ENCODE measurements at regions of chr18 and their contacts with region 1.

Region 1: DNA sequence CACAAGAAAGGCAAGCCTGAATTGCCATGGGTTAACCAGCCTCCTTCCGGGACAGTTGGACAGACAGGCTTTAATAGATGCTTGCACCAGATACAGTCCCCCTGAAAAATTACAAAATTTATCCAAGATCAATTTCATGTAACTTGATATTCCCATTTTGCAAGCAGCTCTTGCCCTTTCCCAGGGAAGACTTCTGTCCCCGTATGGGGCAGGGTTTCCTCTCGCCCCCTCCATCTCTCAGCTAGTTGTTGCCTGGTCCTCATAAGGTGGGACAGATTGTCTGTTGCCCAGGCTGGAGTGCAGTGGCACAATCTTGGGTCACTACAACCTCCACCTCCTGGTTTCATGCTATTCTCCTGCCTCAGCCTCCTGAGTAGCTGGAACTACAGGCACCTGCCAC is 61.2 kb downstream of the TTC39C start:
- DNase-seq: no peak
- H3K4me3 Mint-ChIP-seq: peak overlapping the region; percentile 51
- H3K27ac Mint-ChIP-seq: peak overlapping the region; percentile 85
- H3K4me1 Mint-ChIP-seq: peaks cover 25% of the 10 kb centered on the region
- H3K27me3 Mint-ChIP-seq: no peaks in the 10 kb centered on the region

Region 2: DNA sequence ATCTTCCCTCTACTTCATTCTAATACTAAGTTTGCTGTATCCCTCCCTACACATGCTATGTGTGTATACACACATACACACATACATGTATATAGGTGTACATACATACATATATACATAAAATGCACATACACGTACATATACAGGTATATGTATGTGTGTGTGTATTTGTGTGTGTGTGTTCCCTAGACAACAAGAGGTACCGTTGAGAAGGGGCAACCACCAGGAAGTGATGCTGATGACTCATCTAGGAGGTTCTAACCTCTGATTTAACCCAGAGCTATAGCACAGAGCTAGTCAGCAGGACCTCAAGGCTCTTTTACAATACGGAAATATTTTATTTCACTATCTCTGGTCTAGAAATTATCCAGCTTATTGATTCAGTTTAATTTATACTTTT is 247.3 kb before region 1 on chr18:
- intact Hi-C with region 1: loop called (anchors 5 kb)
- DNase-seq: peak; percentile 89
- H3K4me3 Mint-ChIP-seq: no peak overlapping the region
- H3K27ac Mint-ChIP-seq: peak overlapping the region; percentile 79
- H3K4me1 Mint-ChIP-seq: peaks cover 37% of the 10 kb centered on the region
- H3K27me3 Mint-ChIP-seq: peaks cover 3% of the 10 kb centered on the region

Region 3: GRCh38 chr18:23924813-23925212 is 150.9 kb before region 1 on chr18:
- intact Hi-C with region 1: loop called (anchors 5 kb)
- DNase-seq: no peak
- H3K4me3 Mint-ChIP-seq: no peak overlapping the region
- H3K27ac Mint-ChIP-seq: no peak overlapping the region
- H3K4me1 Mint-ChIP-seq: peaks cover 29% of the 10 kb centered on the region
- H3K27me3 Mint-ChIP-seq: peaks cover 16% of the 10 kb centered on the region

Region 4: DNA sequence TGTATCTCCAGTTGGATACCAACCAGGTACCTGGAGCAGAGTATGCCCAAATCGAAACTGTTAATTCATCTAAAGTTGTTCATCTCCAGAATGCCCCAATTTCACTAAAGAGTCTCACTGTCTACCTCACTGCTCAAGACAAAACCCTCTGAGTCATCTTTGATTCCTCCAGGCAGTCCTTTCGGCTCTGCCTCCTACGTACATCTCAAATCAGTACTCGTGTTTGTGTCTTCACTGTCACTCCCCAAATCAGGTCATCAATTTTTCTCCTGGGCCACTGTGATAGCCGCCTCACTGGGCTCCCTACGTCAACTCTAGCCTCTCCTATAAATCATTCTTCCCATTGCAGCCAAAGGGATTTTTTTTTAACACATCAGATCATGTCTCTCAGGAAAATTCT is 103.3 kb before region 1 on chr18:
- intact Hi-C with region 1: loop called (anchors 5 kb)
- DNase-seq: peak; percentile 64
- H3K4me3 Mint-ChIP-seq: no peak overlapping the region
- H3K27ac Mint-ChIP-seq: no peak overlapping the region
- H3K4me1 Mint-ChIP-seq: peaks cover 26% of the 10 kb centered on the region
- H3K27me3 Mint-ChIP-seq: peaks cover 24% of the 10 kb centered on the region

Region 5: GRCh38 chr18:24019641-24020331 is 55.9 kb before region 1 on chr18:
- intact Hi-C with region 1: loop called (anchors 1 kb)
- DNase-seq: peak; percentile 91
- H3K4me3 Mint-ChIP-seq: peak overlapping the region; percentile 87
- H3K27ac Mint-ChIP-seq: peak overlapping the region; percentile 94
- H3K4me1 Mint-ChIP-seq: peaks cover 78% of the 10 kb centered on the region
- H3K27me3 Mint-ChIP-seq: no peaks in the 10 kb centered on the region

Region 6: DNA sequence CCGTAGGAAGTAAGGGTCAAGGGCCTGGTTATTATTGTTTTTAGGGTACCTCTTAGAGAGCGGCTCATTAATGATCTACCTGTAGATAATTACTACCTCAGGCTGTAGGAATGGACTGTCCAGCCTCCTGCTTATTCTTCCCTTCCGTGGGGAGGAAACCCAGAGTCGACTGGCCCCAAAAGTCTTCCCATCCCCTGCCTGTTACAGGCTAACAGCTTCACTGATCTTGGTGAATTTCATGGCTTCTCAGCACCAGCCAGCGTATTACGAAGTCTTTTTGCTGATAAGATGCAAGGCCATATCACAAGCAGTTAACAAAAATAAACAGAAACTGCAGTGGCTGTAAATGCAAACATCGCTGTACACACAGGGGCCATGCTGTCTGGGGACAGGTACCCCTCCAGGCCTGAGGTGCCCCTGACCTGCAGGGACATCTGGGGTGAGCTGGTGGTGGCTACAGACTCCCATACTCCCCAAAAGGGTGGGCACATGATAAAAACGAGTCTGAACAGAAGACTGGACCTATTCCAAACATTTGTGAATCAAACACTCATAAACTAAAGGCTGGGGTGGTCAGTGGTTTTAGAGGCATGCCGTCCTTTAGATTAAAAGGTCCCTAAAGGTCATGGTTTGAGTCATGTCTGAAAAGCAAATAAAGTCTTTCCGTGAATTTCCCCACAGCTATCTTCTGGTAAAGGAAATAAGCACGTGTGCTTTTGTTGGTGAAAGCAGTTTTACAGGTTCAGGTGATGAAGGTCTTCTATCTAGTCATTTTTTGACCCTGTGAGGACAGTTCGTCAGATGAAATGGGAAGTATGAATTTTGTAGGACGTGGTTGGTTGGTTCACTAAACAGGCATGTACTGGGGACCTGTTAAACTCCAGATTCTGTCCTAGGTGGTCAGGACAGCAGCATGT is 24.4 kb before region 1 on chr18:
- intact Hi-C with region 1: loop called (anchors 1 kb)
- DNase-seq: peak; percentile 56
- H3K4me3 Mint-ChIP-seq: peak overlapping the region; percentile 64
- H3K27ac Mint-ChIP-seq: peak overlapping the region; percentile 86
- H3K4me1 Mint-ChIP-seq: peaks cover 58% of the 10 kb centered on the region
- H3K27me3 Mint-ChIP-seq: no peaks in the 10 kb centered on the region

Region 7: DNA sequence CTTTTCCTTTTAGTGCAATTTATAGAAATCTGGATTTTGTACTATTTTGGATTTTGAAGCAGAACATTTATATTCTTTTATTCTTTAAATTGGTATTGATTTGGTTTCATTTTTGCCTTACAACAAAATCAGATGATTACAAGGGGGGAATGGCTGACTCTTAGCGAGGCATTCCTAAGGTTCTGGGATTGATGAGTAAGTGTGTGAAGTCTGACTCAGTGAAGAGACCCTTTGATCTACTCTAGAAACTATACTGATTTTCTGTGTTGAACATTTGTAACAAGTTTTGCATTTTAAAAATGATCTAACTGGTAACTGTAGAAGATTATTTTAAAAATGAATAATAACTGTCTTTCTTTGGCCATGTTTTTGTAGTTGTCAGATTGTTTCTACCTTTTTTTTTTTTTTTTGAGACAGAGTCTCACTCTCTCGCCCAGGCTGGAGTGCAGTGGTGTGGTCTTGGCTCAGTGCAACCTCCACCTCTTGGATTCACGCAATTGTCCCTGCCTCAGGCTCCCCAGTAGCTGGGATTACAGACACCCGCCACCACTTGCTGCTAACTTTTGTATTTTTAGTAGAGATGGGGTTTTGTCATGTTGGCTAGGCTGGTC is 12.5 kb before region 1 on chr18:
- intact Hi-C with region 1: loop called (anchors 2 kb)
- DNase-seq: no peak
- H3K4me3 Mint-ChIP-seq: no peak overlapping the region
- H3K27ac Mint-ChIP-seq: no peak overlapping the region
- H3K4me1 Mint-ChIP-seq: peaks cover 31% of the 10 kb centered on the region
- H3K27me3 Mint-ChIP-seq: no peaks in the 10 kb centered on the region

Region 8: DNA sequence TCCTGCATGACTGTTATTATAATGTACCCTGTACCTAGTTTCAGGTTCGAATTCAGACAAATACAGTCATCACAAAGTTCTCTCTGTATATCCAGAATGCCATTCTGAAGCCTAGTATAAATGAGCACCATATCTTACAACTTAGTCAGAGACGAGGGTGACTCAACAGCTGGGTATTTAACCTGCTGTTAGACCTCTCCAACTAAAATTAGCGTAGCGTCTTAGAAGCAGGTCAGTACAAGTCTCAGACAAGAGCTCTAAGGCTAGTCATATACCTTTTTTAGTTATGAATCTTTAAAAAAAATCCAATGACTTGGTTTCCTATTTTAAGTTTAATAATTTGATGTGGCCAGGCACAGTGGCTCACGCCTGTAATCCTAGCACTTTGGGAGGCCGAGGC is 137.2 kb after region 1 on chr18:
- intact Hi-C with region 1: no loop called
- DNase-seq: no peak
- H3K4me3 Mint-ChIP-seq: no peak overlapping the region
- H3K27ac Mint-ChIP-seq: no peak overlapping the region
- H3K4me1 Mint-ChIP-seq: no peaks in the 10 kb centered on the region
- H3K27me3 Mint-ChIP-seq: peaks cover 21% of the 10 kb centered on the region